Aorta (tissue), 5 donors: ENCODE measurements at regions of chr11 and their contacts with region 1.

Region 1: DNA sequence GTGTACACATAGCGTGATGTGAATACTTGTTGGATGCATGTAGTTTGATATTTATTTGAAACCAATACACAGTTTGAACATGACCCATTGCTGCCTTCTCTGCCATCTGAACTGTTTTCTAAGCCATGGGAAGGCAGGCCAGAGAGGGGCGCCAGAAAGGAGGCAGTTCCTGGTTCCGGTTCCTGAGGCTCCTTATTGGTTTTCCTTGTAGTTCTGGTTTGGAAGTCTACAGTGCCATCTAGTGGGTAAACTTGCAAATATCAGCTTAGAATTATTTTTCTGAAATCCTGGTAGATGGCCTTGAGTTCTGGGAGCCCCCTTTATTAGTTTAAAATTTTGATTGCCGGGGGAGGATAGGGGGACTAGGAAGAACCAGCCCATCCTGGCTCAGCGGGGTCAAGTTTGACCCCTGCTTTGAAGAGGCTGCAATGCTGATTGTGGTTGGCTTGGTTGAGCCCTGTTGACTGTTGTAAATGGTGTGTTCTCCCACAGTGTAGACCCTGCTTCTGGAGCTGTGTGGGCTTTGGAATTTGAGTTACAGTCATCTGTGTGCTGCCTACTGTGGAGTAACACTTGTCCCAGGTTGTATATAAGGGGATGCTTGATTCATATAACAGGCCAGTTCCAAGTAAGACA is 48.4 kb downstream of the GRAMD1B start:
- DNase-seq: peak in 1 of 2 donors; percentile 62
- ATAC-seq: peak; percentile 75
- H3K4me3 ChIP-seq: no peak overlapping the region
- H3K27ac ChIP-seq: no peak overlapping the region
- H3K4me1 ChIP-seq: no peaks in the 10 kb centered on the region
- H3K27me3 ChIP-seq: no peaks in the 10 kb centered on the region

Region 2: DNA sequence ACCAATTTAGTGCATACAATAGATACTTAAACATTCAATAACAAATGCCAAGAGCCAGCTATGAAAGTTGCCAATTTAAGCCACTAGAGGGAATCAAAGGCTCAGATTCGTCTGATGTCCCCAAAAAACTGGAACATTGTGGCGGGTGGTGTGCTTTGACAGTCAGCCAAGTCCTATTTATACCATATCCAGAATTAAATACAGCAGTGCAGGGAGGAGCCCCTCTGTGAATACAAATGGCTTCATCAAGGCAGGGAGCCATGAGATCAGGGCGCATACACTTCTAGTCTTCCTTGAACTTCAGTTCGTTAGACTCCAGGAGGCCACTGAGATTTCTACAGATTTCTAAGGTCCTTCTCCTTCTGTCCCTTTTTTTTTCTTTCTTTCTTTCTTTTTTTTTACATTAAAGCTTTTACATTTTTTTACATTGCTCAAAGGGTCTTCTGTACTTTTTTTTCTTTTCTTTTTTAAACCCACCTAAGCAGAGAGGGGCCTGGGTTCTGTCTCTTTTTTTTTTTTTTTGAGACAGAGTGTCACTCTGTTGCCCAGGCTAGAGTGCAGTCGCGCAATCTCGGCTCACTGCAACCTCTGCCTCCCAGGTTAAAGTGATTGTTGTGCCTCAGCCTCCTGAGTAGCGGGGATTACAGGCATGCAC is 375.0 kb before region 1 on chr11:
- intact Hi-C with region 1: loop called (anchors 5 to 10 kb)
- DNase-seq: peak in 1 of 2 donors; percentile 69
- ATAC-seq: peak; percentile 84
- H3K4me3 ChIP-seq: no peak overlapping the region
- H3K27ac ChIP-seq: peak overlapping the region; percentile 22 to 82
- H3K4me1 ChIP-seq: no peaks in the 10 kb centered on the region
- H3K27me3 ChIP-seq: no peaks in the 10 kb centered on the region

Region 3: GRCh38 chr11:123301696-123302400 is 176.6 kb before region 1 on chr11:
- intact Hi-C with region 1: loop called (anchors 1 to 2 kb)
- DNase-seq: peak; percentile 71 to 87
- ATAC-seq: peak; percentile 87
- H3K4me3 ChIP-seq: peak overlapping the region; percentile 5 to 31
- H3K27ac ChIP-seq: no peak overlapping the region
- H3K4me1 ChIP-seq: no peaks in the 10 kb centered on the region
- H3K27me3 ChIP-seq: no peaks in the 10 kb centered on the region

Region 4: DNA sequence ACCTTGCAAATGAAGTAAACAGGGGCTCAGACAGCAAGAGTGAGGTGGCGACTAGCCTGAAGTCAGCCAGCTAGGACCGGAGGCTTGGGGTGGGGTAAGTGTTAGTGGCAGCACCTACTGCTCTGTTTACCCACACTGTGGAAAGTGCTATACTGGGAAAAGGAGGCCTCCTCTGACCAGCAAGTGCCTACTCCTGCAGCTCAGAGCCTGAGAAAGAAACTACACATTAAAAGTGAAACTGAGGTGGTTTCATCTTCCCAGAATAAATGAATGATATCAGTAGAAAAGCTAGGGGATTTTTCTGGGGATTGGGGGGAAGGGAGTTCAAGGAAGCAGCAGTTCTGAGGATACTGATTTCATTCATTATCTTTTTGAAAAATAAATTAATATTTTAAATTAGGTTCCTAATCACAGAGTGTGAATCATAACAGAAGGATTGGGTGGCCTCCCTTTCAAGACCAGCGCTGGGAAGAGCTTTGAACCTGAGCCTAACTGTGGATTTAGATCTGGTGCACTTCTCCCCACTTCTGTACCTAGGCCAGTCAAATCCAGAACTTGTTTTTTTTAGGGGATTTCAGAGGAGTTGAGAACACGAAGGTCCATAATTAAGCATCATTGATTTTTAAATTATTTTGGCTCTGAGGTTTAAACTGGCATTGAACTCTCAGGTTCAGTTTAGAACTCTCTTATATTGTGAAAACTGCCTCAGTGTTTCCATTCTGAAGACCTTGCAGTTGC is 96.5 kb before region 1 on chr11:
- intact Hi-C with region 1: no loop called
- DNase-seq: no peak
- ATAC-seq: no peak
- H3K4me3 ChIP-seq: no peak overlapping the region
- H3K27ac ChIP-seq: no peak overlapping the region
- H3K4me1 ChIP-seq: no peaks in the 10 kb centered on the region
- H3K27me3 ChIP-seq: no peaks in the 10 kb centered on the region

Region 5: GRCh38 chr11:123407130-123407995 is 71.1 kb before region 1 on chr11:
- intact Hi-C with region 1: loop called in 1 of 2 experiments (anchors 5 kb)
- DNase-seq: peak in 1 of 2 donors; percentile 73
- ATAC-seq: no peak
- H3K4me3 ChIP-seq: no peak overlapping the region
- H3K27ac ChIP-seq: no peak overlapping the region
- H3K4me1 ChIP-seq: no peaks in the 10 kb centered on the region
- H3K27me3 ChIP-seq: no peaks in the 10 kb centered on the region